B cell (primary cell): ENCODE measurements at regions of chr17 and their contacts with region 1.

Region 1: DNA sequence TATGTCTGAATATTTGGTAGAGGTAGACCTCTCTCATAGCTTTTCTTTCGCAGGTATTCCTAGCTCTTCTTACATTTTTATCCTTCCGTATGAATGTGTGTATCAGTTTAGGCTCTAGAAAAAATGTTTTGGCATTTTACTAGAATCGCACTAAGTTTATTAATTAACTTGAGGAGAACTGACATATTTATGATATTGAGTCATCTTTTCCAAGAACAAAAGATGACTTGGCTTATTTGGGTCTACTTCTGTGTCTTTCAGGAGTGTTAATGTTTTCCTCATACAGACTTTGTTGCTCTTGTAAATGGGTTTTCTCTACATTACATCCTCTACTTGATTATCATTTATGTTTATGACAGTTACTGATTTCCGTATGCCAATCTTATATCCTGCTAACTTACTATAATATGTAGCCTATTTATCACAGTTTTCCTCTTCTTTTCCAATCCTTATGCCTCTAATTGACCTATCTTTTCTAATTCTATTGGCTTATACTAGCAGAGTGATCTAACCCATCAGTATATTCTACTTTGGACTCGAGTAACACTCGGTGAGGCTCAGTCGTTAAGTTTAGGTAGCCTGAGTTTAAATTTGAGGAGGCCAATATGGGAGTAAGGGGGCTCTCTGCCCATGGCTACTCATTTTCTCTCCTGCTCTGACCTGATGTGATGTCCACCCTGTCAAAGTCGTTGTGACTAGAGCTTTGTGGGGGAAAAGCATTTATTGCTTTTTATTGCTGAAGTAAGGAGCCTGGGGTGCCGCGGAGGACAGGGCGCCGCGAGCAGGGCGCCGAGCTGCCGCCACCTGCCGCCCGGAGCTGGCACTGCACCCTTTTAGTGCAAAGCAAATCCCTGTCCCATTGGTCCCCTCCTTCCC is 20.0 kb downstream of the ST6GALNAC1 start:
- DNase-seq: peak; percentile 83
- ATAC-seq: peak; percentile 94
- H3K4me3 ChIP-seq: no peak overlapping the region
- H3K4me3 Mint-ChIP-seq: no peak overlapping the region
- H3K27ac ChIP-seq: no peak overlapping the region
- H3K27ac Mint-ChIP-seq: no peak overlapping the region
- H3K4me1 ChIP-seq: peaks cover 0 to 3% of the 10 kb centered on the region in 2 donors
- H3K4me1 Mint-ChIP-seq: peaks cover 2% of the 10 kb centered on the region
- H3K27me3 ChIP-seq: peaks cover 0 to 12% (median 1%) of the 10 kb centered on the region in 4 experiments
- H3K27me3 Mint-ChIP-seq: peaks cover 14% of the 10 kb centered on the region
- CTCF ChIP-seq: peak; percentile 100

Region 2: DNA sequence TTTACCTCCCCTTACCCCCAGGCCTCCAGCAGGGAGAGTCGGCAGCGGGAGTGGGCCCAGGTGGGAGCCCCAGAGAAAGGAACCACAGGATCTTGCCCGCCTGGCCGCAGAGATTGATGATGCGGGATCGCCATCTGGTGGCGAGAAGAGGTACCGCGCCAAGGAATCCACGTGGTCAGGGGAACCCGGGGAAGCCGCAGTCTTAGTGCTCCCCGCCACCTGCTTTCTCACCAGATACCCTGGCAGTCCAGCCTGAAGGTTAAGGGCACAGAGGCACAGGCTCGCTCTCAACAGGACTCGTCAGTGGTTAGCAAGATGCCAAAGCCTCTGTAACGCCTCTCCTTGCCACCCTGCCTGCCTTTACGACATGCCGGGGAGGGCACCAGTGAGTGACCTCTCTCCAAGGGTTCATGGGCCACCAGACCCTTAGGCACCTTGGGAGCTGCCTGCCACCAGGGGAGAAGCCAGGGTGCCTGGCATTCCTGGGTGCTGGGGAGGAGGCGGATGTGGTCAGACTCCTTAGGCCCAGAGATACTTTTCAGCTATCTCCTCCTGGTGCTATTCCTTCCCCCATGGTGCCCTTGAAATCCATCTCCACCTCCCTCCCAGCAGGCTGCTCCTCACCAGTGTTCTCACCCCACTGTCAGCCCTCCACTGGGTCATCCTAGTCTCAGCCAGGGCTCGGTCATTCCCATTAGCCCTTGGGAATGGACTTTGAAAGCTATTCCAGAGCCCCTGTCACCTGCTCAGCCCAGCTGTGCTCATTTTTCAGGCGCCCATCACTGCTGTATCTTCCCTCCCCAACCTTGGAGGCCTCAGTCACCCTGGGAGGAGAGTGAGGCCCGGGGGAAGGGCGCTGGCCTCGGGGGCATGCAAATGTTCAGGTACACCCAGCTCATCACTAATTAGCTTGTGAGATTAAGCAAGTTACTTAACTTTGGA is 116.8 kb before region 1 on chr17:
- CTCF ChIA-PET with region 1: interaction called, 11 read pairs
- POLR2A ChIA-PET with region 1: no interaction called
- intact Hi-C with region 1: no loop called
- DNase-seq: peak; percentile 92
- ATAC-seq: peak; percentile 73
- H3K4me3 ChIP-seq: no peak overlapping the region
- H3K4me3 Mint-ChIP-seq: no peak overlapping the region
- H3K27ac ChIP-seq: no peak overlapping the region
- H3K27ac Mint-ChIP-seq: peak overlapping the region; percentile 50
- H3K4me1 ChIP-seq: peaks cover 14 to 28% of the 10 kb centered on the region in 2 donors
- H3K4me1 Mint-ChIP-seq: peaks cover 28% of the 10 kb centered on the region
- H3K27me3 ChIP-seq: no peaks in the 10 kb centered on the region
- H3K27me3 Mint-ChIP-seq: peaks cover 2% of the 10 kb centered on the region
- CTCF ChIP-seq: peak; percentile 87

Region 3: DNA sequence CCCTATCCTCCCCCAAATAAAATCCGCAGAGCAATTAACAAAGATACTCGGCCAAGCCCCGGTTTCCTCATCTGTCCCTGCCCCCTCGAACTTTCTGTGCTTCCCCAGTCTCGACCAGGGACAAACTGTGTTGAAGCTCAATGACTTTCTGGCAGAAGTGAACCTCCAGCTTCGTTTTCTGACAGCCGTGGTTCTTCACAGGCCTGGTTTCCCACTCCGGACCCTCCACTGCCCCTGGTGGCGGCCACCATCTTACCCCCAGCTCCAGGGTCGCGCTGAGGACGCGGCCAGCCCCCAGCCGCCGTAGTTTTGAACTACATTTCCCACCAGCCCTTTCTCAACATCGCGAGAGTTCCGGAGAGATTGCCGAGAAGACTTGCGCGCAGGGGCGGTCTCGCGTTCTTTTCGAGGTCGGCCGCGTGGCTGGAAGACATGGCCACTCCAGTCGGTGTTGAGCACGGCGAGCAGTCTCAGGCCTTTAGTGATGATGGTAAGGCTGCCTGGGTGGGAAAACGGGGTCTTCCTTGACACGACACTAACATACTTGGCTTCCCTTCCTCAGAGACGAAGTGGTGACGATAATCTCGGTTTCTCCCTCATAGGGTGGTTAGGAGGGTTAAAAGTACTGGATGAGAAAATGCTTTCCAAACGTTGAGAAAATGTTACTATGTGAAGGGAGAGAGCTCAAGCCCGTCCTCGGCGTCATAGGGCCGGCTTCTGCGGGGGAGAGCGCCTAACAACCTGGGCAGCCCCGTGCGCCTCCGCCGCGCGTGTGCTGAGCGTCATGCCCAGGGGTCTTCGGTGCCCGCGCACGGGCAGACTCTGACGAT is 65.9 kb before region 1 on chr17:
- CTCF ChIA-PET with region 1: interaction called, 84 read pairs
- POLR2A ChIA-PET with region 1: interaction called, 4 read pairs
- intact Hi-C with region 1: loop called (anchors 1 kb)
- DNase-seq: peak; percentile 97
- ATAC-seq: peak; percentile 93
- H3K4me3 ChIP-seq: peak overlapping the region; percentile 76 to 94 (median 88)
- H3K4me3 Mint-ChIP-seq: peak overlapping the region; percentile 100
- H3K27ac ChIP-seq: peak overlapping the region; percentile 81 to 98
- H3K27ac Mint-ChIP-seq: peak overlapping the region; percentile 97
- H3K4me1 ChIP-seq: peaks cover 16 to 37% of the 10 kb centered on the region in 2 donors
- H3K4me1 Mint-ChIP-seq: peaks cover 63% of the 10 kb centered on the region
- H3K27me3 ChIP-seq: no peaks in the 10 kb centered on the region
- H3K27me3 Mint-ChIP-seq: no peaks in the 10 kb centered on the region
- CTCF ChIP-seq: peak; percentile 58

Region 4: DNA sequence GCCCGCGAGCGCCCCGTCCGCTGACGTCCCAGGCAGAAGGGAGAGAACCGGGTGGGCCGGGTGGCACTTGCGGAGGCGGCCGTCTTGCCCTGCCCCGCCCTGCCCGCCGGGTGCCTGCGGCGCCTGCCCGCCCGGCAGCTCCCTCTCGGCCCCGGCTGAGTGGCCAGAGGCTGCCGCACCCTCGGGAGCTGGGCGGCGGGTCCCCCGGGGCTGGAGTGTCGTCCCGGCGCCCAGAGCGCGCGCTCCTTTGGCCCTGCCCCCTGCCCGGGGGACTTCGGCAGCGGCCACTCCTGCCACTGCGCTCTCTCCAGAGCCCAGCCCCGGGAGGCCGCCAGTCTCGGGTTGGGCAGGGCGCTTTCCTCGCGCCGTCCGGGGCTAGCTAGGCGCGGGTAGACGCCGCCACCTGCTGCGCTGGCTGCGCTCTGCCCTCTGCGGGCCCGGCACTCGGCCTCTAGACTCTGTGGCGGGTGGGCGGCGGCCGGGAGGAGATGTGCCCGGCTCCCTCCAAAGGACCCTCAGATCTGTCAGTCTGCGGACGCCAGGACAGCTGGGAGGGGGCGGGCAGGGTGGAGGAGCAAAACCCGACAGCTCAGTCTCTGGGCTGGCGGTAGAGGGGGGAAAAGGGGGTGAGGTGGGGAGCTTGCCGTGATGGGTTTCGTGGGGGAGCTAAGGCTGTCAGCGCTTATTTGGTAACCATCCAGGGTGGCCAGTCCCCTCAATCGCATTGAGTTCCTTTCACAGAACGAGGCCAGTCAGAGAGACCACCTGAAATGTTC is 37.5 kb before region 1 on chr17 and contains the start of gene ST6GALNAC2:
- CTCF ChIA-PET with region 1: interaction called, 13 read pairs
- POLR2A ChIA-PET with region 1: interaction called, 3 read pairs
- intact Hi-C with region 1: no loop called
- DNase-seq: peak; percentile 66
- ATAC-seq: peak; percentile 76
- H3K4me3 ChIP-seq: peak within 1 kb of the TSS; percentile 45 to 77 (median 57)
- H3K4me3 Mint-ChIP-seq: peak within 1 kb of the TSS; percentile 88
- H3K27ac ChIP-seq: no peak within 1 kb of the TSS
- H3K27ac Mint-ChIP-seq: no peak within 1 kb of the TSS
- H3K4me1 ChIP-seq: peaks cover 21% of the 10 kb centered on the region in 2 donors
- H3K4me1 Mint-ChIP-seq: peaks cover 12% of the 10 kb centered on the region
- H3K27me3 ChIP-seq: peaks cover 0 to 38% (median 20%) of the 10 kb centered on the region in 4 experiments
- H3K27me3 Mint-ChIP-seq: peaks cover 43% of the 10 kb centered on the region
- CTCF ChIP-seq: peak; percentile 27
- total RNA-seq, gene ST6GALNAC2: 2.7 TPM in 2 replicates

Region 5: GRCh38 chr17:76612977-76613851 is 10.3 kb before region 1 on chr17:
- CTCF ChIA-PET with region 1: interaction called, 38 read pairs
- POLR2A ChIA-PET with region 1: no interaction called
- intact Hi-C with region 1: no loop called
- DNase-seq: no peak
- ATAC-seq: no peak
- H3K4me3 ChIP-seq: no peak overlapping the region
- H3K4me3 Mint-ChIP-seq: no peak overlapping the region
- H3K27ac ChIP-seq: no peak overlapping the region
- H3K27ac Mint-ChIP-seq: peak overlapping the region; percentile 59
- H3K4me1 ChIP-seq: peaks cover 4 to 5% of the 10 kb centered on the region in 2 donors
- H3K4me1 Mint-ChIP-seq: peaks cover 12% of the 10 kb centered on the region
- H3K27me3 ChIP-seq: no peaks in the 10 kb centered on the region
- H3K27me3 Mint-ChIP-seq: peaks cover 16% of the 10 kb centered on the region
- CTCF ChIP-seq: no peak

Region 6: DNA sequence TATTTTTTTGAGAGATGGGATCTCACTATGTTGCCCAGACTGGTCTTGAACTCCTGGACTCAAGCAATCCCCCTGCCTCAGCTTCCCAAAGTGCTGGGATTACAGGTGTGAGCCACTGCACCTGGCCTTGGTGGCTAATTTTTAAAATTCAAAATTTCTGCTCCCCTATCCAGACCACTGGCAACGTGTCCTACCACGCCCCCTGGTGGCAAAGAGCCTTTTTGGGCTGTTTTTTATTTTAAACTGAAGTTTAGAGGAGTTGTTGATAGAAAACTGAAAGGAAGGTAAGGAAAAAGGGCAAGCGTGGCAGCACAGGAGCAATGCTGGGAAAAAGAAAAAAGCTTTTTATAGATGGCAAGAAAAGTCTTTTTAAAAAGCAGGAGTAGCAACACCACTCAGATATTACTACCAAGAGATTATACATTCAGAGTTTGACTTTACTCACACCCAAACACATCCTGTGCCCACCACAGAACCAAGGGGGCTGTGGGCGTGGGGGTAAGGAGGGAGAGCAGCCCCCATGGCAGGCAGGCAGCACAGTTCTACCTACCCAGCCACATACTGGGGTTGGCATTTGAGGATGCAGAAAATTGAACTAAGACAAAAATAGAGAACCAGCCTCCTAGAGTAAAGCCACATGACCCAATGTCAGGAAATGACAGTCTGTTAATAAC is 91.5 kb after region 1 on chr17:
- CTCF ChIA-PET with region 1: interaction called, 15 read pairs
- POLR2A ChIA-PET with region 1: no interaction called
- intact Hi-C with region 1: no loop called
- DNase-seq: peak; percentile 75
- ATAC-seq: peak; percentile 7
- H3K4me3 ChIP-seq: peak overlapping the region in 3 of 5 experiments; percentile 11 to 20 (median 12)
- H3K4me3 Mint-ChIP-seq: peak overlapping the region; percentile 62
- H3K27ac ChIP-seq: peak overlapping the region; percentile 46 to 72
- H3K27ac Mint-ChIP-seq: peak overlapping the region; percentile 21
- H3K4me1 ChIP-seq: peaks cover 22 to 31% of the 10 kb centered on the region in 2 donors
- H3K4me1 Mint-ChIP-seq: peaks cover 25% of the 10 kb centered on the region
- H3K27me3 ChIP-seq: no peaks in the 10 kb centered on the region
- H3K27me3 Mint-ChIP-seq: no peaks in the 10 kb centered on the region
- CTCF ChIP-seq: peak; percentile 91

Region 7: GRCh38 chr17:76753061-76753961 is 129.8 kb after region 1 on chr17:
- CTCF ChIA-PET with region 1: no interaction called
- POLR2A ChIA-PET with region 1: no interaction called
- intact Hi-C with region 1: no loop called
- DNase-seq: no peak
- ATAC-seq: no peak
- H3K4me3 ChIP-seq: no peak overlapping the region
- H3K4me3 Mint-ChIP-seq: no peak overlapping the region
- H3K27ac ChIP-seq: no peak overlapping the region
- H3K27ac Mint-ChIP-seq: no peak overlapping the region
- H3K4me1 ChIP-seq: peaks cover 0 to 15% of the 10 kb centered on the region in 2 donors
- H3K4me1 Mint-ChIP-seq: peaks cover 12% of the 10 kb centered on the region
- H3K27me3 ChIP-seq: no peaks in the 10 kb centered on the region
- H3K27me3 Mint-ChIP-seq: no peaks in the 10 kb centered on the region
- CTCF ChIP-seq: no peak